Ascending aorta (tissue), 2 donors: ENCODE measurements at regions of chr14 and their contacts with region 1.

Region 1: DNA sequence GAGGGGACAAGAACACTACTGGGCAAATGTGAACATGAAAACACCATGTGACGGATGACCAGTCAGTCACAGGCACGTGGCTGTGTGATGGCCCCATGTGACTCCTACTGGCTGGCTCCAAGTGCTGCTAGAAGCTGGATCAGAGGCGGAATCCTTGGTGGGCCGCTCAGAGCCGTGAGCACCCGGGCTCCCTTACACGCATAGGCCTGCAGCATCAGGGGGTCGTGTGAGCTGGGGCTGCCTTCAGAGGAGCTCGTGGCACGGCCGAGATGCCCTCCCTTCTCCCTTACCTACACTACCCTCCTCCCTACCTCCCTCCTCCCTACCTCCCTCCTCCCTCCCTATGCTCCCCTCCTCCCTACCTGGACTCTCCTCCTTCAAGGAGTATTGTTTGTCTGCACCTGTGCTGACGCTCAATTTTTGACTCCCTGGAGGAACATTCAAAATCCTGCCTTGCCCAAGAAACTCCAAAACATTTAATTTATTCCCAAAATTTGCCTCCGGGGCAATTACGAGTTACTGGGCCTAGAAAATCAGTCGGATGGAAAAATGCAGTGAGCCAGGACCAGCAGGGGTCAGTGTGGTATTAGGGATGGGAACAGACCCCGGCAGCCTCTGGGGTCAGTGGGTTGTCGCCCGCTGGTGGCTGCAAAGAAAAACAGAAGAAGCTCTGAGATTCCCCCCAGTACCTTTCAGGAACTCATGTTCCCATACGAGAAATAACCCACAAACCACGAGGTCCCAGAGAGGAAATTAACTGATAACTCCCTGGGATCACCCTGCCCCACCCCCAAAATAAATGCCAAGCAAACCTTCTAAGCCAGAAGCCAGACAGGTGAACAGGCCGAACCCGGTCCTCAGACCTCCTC is 61.2 kb downstream of the C14orf132 start:
- DNase-seq: peak in 1 of 2 donors; percentile 76
- H3K4me3 ChIP-seq: no peak overlapping the region
- H3K27ac ChIP-seq: no peak overlapping the region
- H3K4me1 ChIP-seq: no peaks in the 10 kb centered on the region
- H3K27me3 ChIP-seq: no peaks in the 10 kb centered on the region
- CTCF ChIP-seq: peak; percentile 57 to 68 (median 60)

Region 2: GRCh38 chr14:95561001-95561412 is 539.4 kb before region 1 on chr14:
- intact Hi-C with region 1: loop called (anchors 10 kb)
- DNase-seq: peak in 1 of 2 donors; percentile 89
- H3K4me3 ChIP-seq: no peak overlapping the region
- H3K27ac ChIP-seq: no peak overlapping the region
- H3K4me1 ChIP-seq: no peaks in the 10 kb centered on the region
- H3K27me3 ChIP-seq: no peaks in the 10 kb centered on the region
- CTCF ChIP-seq: peak; percentile 80 to 88 (median 88)

Region 3: DNA sequence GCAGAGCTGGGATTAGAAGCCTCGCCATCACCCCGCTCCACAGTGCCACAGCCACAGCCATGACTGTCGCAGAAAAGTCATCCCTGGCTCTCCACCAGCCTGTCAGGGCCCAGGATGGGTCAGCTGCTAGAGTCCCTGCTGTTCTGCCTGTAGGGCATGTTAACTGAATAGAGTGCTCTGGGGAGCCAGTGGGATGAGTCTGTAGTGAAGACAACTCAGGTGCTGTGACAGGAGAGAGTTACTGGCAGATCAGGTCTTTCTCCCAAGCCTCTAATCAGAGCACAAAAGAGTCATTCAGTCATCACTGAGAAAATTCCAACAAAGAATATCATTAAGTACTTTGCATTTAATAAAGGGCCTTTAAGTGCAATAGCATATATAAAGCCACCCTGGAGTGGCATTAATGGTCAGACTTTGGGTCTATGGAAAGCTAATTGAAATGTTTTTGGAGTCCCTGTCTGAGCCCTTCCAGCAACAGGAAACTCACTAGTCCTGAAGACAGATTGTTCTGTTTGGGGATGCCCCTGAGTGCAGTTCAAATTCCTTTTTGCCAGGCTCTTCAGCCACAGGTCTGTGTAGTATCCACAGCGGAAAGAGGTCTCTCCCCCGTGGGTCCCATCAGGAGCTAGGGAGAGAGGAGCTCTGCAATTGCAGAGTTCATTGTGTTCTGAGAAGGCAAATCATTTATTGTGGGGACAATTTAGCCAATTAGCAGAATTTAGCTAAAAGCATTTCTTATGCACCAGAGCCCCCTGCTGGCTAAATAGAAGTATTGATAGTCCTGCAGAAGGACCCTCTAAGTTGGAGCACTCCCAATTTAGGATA is 106.4 kb before region 1 on chr14:
- intact Hi-C with region 1: loop called (anchors 1 kb)
- DNase-seq: no peak
- H3K4me3 ChIP-seq: no peak overlapping the region
- H3K27ac ChIP-seq: no peak overlapping the region
- H3K4me1 ChIP-seq: no peaks in the 10 kb centered on the region
- H3K27me3 ChIP-seq: no peaks in the 10 kb centered on the region
- CTCF ChIP-seq: peak; percentile 54 to 82 (median 61)

Region 4: DNA sequence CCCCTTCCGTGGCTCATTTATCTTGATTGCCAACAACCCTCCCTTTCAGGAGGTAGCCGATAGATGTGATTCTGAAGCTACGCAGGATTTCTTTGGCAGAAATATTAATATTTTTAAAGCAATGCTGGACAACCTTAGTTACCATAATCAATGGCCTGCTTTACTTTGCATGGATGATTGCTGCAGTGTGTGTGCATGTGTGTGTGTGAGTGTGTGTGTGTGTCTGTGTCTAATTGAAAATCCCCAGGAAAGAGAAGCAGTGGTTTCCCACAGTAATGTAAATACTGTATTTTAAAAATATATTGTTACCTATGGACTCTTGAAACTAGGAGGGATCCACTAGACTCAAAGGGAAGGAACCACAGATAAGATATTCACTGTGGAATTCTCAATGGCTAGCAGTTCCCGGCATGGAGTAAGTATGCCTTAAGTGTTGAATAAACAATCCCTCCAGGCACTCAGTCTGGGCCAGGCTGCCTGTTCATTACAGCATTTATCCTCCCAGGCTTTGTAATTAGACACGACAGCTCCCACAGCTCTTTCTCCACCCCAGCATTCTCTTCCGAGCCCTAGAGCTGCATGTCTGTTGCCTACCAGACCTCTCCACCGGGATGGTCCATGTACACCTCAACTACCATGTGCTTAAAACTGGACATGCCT is 83.8 kb before region 1 on chr14:
- intact Hi-C with region 1: loop called (anchors 5 kb)
- DNase-seq: no peak
- H3K4me3 ChIP-seq: no peak overlapping the region
- H3K27ac ChIP-seq: no peak overlapping the region
- H3K4me1 ChIP-seq: no peaks in the 10 kb centered on the region
- H3K27me3 ChIP-seq: no peaks in the 10 kb centered on the region
- CTCF ChIP-seq: no peak

Region 5: DNA sequence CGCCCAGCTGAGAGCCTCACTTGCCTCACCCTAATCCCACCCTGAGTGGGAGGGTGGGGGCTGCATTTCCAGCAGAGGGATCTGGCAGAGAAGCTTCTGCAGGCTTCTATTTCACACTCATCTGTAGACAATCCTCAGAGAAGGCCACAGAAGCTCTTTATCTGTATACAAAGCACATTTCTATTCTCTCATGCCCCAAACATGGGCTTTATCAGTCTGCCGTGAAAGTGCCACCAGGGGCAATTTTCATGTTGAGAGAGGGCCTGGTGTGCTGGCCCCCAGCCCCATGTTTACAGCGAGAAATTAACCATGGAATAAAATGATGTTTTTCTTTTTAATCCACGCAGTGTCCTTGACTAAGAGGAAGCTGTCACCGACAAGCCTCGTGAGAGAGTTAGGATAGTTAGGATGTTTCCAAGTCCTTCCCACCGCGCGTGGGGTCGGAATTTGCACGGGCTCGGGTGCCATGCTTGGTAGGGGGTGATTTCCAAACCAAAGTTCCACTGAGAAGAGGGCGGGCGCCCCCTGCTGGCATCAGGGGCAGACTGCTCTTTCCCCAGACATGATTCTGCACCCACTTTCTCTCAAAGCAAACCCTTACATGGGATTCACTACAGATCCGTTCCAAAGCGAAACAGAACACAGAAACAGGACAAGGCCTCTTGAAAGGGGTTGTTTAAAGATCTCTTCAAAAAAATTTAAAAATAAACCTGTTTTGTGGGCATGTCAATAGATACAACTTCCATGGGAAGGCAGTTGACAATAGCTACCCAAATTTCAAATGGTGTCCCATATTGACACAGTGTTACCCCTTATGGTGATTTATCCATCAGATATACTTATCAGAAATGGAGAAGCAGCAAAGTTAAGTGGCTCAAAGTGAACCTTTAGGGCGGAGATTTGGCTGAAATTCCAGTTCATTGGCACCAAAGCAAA is 175.1 kb after region 1 on chr14:
- intact Hi-C with region 1: loop called (anchors 2 kb)
- DNase-seq: peak in 1 of 2 donors; percentile 73
- H3K4me3 ChIP-seq: no peak overlapping the region
- H3K27ac ChIP-seq: no peak overlapping the region
- H3K4me1 ChIP-seq: no peaks in the 10 kb centered on the region
- H3K27me3 ChIP-seq: no peaks in the 10 kb centered on the region
- CTCF ChIP-seq: peak; percentile 62 to 90 (median 71)

Region 6: DNA sequence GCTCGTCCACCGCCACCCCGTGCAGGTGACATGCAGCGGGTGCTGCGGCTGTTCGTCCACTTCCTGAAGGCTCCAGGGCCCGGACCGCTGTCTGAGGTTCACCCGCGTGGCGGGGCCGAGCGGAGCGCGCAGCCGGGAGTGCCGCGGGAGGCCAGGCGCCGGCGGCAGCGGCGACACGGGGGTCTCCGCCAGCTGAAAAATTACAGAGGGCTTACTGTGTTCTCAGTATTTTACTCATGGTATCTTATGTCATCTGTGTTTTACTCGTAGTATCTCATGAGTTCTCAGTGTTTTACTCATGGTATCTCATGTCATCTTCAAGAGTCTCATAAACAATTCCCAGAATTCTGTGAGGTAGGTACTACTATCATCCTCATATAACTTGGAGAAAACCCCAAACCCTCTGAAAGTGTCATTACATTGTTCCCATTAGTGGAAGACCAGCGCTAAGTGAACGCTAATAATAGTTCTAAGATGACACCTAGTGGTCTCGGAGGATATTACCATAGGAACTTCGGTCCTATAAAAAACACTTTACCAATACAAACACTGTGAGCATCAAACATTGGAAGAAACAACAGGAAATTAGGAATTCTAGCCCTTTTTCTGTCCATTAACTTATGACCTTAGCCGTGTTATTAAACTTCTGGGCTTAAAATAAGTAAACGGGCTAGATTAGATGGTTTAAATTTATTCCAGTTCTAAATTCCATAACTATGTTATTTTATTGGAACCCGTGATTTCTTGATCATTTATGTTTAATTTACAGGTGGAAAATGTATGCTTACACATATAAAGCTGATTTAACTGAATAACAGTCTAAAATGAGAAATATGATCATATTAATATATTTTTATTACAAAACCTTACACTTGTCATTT is 324.0 kb after region 1 on chr14:
- intact Hi-C with region 1: loop called (anchors 10 kb)
- DNase-seq: no peak
- H3K4me3 ChIP-seq: peak overlapping the region; percentile 43 to 59
- H3K27ac ChIP-seq: no peak overlapping the region
- H3K4me1 ChIP-seq: peaks cover 0 to 2% of the 10 kb centered on the region in 2 donors
- H3K27me3 ChIP-seq: no peaks in the 10 kb centered on the region
- CTCF ChIP-seq: peak; percentile 67 to 78 (median 77)